CD4-positive, alpha-beta memory T cell (primary cell): ENCODE measurements at regions of chr3 and their contacts with region 1.

Region 1: GRCh38 chr3:56783644-56784447 is 17.9 kb downstream of the ARHGEF3 start:
- DNase-seq: peak; percentile 80 to 90 (median 84)
- H3K4me3 ChIP-seq: peak overlapping the region; percentile 26 to 45
- H3K4me3 Mint-ChIP-seq: peak overlapping the region; percentile 73 to 87 (median 84)
- H3K27ac ChIP-seq: peak overlapping the region; percentile 69
- H3K27ac Mint-ChIP-seq: peak overlapping the region; percentile 85 to 97 (median 94)
- H3K4me1 ChIP-seq: peaks cover 100% of the 10 kb centered on the region
- H3K4me1 Mint-ChIP-seq: peaks cover 85 to 100% (median 94%) of the 10 kb centered on the region in 4 donors
- H3K27me3 ChIP-seq: no peaks in the 10 kb centered on the region
- H3K27me3 Mint-ChIP-seq: no peaks in the 10 kb centered on the region

Region 2: GRCh38 chr3:56682462-56683121 is 101.3 kb before region 1 on chr3:
- CTCF ChIA-PET with region 1: interaction called, 3 read pairs
- POLR2A ChIA-PET with region 1: interaction called, 12 read pairs
- intact Hi-C with region 1: no loop called
- DNase-seq: peak; percentile 79 to 86 (median 85)
- H3K4me3 ChIP-seq: peak overlapping the region; percentile 76 to 90
- H3K4me3 Mint-ChIP-seq: peak overlapping the region; percentile 91 to 98 (median 94)
- H3K27ac ChIP-seq: peak overlapping the region; percentile 96
- H3K27ac Mint-ChIP-seq: peak overlapping the region; percentile 93 to 98 (median 96)
- H3K4me1 ChIP-seq: peaks cover 55% of the 10 kb centered on the region
- H3K4me1 Mint-ChIP-seq: peaks cover 28 to 59% (median 42%) of the 10 kb centered on the region in 4 donors
- H3K27me3 ChIP-seq: no peaks in the 10 kb centered on the region
- H3K27me3 Mint-ChIP-seq: no peaks in the 10 kb centered on the region

Region 3: GRCh38 chr3:56702490-56703315 is 81.1 kb before region 1 on chr3:
- CTCF ChIA-PET with region 1: interaction called, 17 read pairs
- POLR2A ChIA-PET with region 1: interaction called, 4 read pairs
- intact Hi-C with region 1: no loop called
- DNase-seq: peak; percentile 57 to 70 (median 66)
- H3K4me3 ChIP-seq: no peak overlapping the region
- H3K4me3 Mint-ChIP-seq: no peak overlapping the region
- H3K27ac ChIP-seq: no peak overlapping the region
- H3K27ac Mint-ChIP-seq: peak overlapping the region in 3 of 7 donors; percentile 15 to 42 (median 32)
- H3K4me1 ChIP-seq: peaks cover 16% of the 10 kb centered on the region
- H3K4me1 Mint-ChIP-seq: peaks cover 11 to 21% (median 13%) of the 10 kb centered on the region in 4 donors
- H3K27me3 ChIP-seq: no peaks in the 10 kb centered on the region
- H3K27me3 Mint-ChIP-seq: no peaks in the 10 kb centered on the region

Region 4: DNA sequence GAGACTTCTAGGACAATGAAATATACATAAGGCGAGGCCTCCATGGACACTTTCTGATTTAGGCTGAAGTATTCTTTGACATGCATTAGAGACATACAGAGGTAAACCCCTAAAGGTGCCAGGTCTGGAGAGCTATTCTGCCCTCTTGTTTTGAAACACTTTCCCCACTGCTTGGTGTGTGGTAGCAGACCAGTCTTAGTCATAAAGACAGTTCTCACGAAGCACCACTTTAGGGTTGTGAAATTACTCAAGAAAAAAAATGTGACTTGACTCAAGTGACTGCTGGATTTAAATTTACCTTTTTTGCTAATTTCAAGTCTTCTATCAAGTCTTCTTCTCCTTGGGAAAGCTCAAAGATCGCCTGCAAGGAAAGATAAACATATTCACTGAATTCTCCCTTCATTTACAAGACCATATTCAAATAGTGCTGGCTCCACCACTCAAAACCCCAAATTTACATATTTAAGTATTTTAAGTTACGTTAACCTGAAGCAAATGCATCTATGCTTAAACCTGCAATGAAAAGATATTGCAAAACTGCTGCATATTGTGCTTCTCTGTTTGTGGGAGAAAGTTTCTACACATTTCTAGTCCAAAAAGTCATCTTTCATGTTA is 30.5 kb before region 1 on chr3:
- CTCF ChIA-PET with region 1: interaction called, 11 read pairs
- POLR2A ChIA-PET with region 1: interaction called, 112 read pairs
- intact Hi-C with region 1: loop called (anchors 2 kb)
- DNase-seq: peak in 1 of 5 donors; percentile 33
- H3K4me3 ChIP-seq: no peak overlapping the region
- H3K4me3 Mint-ChIP-seq: peak overlapping the region in 6 of 8 donors; percentile 1 to 96 (median 76)
- H3K27ac ChIP-seq: peak overlapping the region; percentile 22
- H3K27ac Mint-ChIP-seq: peak overlapping the region; percentile 42 to 97 (median 76)
- H3K4me1 ChIP-seq: peaks cover 62% of the 10 kb centered on the region
- H3K4me1 Mint-ChIP-seq: peaks cover 43 to 68% (median 54%) of the 10 kb centered on the region in 4 donors
- H3K27me3 ChIP-seq: no peaks in the 10 kb centered on the region
- H3K27me3 Mint-ChIP-seq: no peaks in the 10 kb centered on the region

Region 5: GRCh38 chr3:56758539-56758981 is 25.3 kb before region 1 on chr3:
- CTCF ChIA-PET with region 1: interaction called, 11 read pairs
- POLR2A ChIA-PET with region 1: interaction called, 112 read pairs
- intact Hi-C with region 1: loop called (anchors 2 kb)
- DNase-seq: peak; percentile 14 to 69 (median 21)
- H3K4me3 ChIP-seq: no peak overlapping the region
- H3K4me3 Mint-ChIP-seq: peak overlapping the region; percentile 34 to 78 (median 56)
- H3K27ac ChIP-seq: peak overlapping the region; percentile 10
- H3K27ac Mint-ChIP-seq: peak overlapping the region; percentile 48 to 94 (median 86)
- H3K4me1 ChIP-seq: peaks cover 89% of the 10 kb centered on the region
- H3K4me1 Mint-ChIP-seq: peaks cover 68 to 90% (median 78%) of the 10 kb centered on the region in 4 donors
- H3K27me3 ChIP-seq: no peaks in the 10 kb centered on the region
- H3K27me3 Mint-ChIP-seq: no peaks in the 10 kb centered on the region

Region 6: GRCh38 chr3:56769116-56769707 is 14.6 kb before region 1 on chr3:
- CTCF ChIA-PET with region 1: interaction called, 6 read pairs
- POLR2A ChIA-PET with region 1: interaction called, 25 read pairs
- intact Hi-C with region 1: loop called (anchors 2 kb)
- DNase-seq: no peak
- H3K4me3 ChIP-seq: no peak overlapping the region
- H3K4me3 Mint-ChIP-seq: no peak overlapping the region
- H3K27ac ChIP-seq: no peak overlapping the region
- H3K27ac Mint-ChIP-seq: peak overlapping the region in 6 of 7 donors; percentile 9 to 79 (median 38)
- H3K4me1 ChIP-seq: peaks cover 53% of the 10 kb centered on the region
- H3K4me1 Mint-ChIP-seq: peaks cover 39 to 77% (median 58%) of the 10 kb centered on the region in 4 donors
- H3K27me3 ChIP-seq: no peaks in the 10 kb centered on the region
- H3K27me3 Mint-ChIP-seq: no peaks in the 10 kb centered on the region

Region 7: DNA sequence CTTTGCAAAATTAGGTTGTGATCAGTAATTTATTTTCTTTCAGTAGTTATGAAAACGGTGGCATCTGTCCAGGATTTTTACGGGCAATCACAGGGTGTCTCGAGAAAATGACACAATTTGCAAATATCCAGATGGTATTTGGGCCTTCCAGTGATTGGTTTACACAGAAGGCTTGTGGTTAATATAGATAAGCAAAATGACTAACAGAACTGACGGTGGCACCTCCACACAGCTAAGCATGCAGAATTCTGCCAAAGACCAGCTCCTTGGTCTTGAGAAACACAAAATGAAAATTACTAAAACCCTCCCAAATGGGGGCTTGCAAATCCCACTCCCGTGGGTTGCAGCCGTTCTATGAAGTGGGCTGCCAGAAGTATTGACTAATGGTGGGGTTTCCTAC is 12.4 kb after region 1 on chr3:
- CTCF ChIA-PET with region 1: interaction called, 127 read pairs
- POLR2A ChIA-PET with region 1: interaction called, 218 read pairs
- intact Hi-C with region 1: loop called (anchors 1 kb)
- DNase-seq: peak in 1 of 5 donors; percentile 60
- H3K4me3 ChIP-seq: peak overlapping the region in 1 of 2 donors; percentile 29
- H3K4me3 Mint-ChIP-seq: peak overlapping the region; percentile 43 to 88 (median 73)
- H3K27ac ChIP-seq: peak overlapping the region; percentile 39
- H3K27ac Mint-ChIP-seq: peak overlapping the region; percentile 80 to 93 (median 85)
- H3K4me1 ChIP-seq: peaks cover 76% of the 10 kb centered on the region
- H3K4me1 Mint-ChIP-seq: peaks cover 52 to 87% (median 73%) of the 10 kb centered on the region in 4 donors
- H3K27me3 ChIP-seq: no peaks in the 10 kb centered on the region
- H3K27me3 Mint-ChIP-seq: no peaks in the 10 kb centered on the region

Region 8: GRCh38 chr3:56836276-56837163 is 52.7 kb after region 1 on chr3:
- CTCF ChIA-PET with region 1: no interaction called
- POLR2A ChIA-PET with region 1: no interaction called
- intact Hi-C with region 1: no loop called
- DNase-seq: no peak
- H3K4me3 ChIP-seq: no peak overlapping the region
- H3K4me3 Mint-ChIP-seq: no peak overlapping the region
- H3K27ac ChIP-seq: no peak overlapping the region
- H3K27ac Mint-ChIP-seq: peak overlapping the region in 1 of 7 donors; percentile 48
- H3K4me1 ChIP-seq: no peaks in the 10 kb centered on the region
- H3K4me1 Mint-ChIP-seq: peaks cover 25 to 51% (median 36%) of the 10 kb centered on the region in 4 donors
- H3K27me3 ChIP-seq: no peaks in the 10 kb centered on the region
- H3K27me3 Mint-ChIP-seq: no peaks in the 10 kb centered on the region

Region 9: GRCh38 chr3:57127891-57128518 is 344.2 kb after region 1 on chr3:
- CTCF ChIA-PET with region 1: no interaction called
- POLR2A ChIA-PET with region 1: no interaction called
- intact Hi-C with region 1: no loop called
- DNase-seq: no peak
- H3K4me3 ChIP-seq: no peak overlapping the region
- H3K4me3 Mint-ChIP-seq: no peak overlapping the region
- H3K27ac ChIP-seq: no peak overlapping the region
- H3K27ac Mint-ChIP-seq: no peak overlapping the region
- H3K4me1 ChIP-seq: no peaks in the 10 kb centered on the region
- H3K4me1 Mint-ChIP-seq: peaks cover 0 to 1% (median 0%) of the 10 kb centered on the region in 4 donors
- H3K27me3 ChIP-seq: peaks cover 3% of the 10 kb centered on the region
- H3K27me3 Mint-ChIP-seq: peaks cover 2 to 17% of the 10 kb centered on the region in 2 donors